ENCODE measurements at regions of chr10 and their contacts with region 1.

Region 1: DNA sequence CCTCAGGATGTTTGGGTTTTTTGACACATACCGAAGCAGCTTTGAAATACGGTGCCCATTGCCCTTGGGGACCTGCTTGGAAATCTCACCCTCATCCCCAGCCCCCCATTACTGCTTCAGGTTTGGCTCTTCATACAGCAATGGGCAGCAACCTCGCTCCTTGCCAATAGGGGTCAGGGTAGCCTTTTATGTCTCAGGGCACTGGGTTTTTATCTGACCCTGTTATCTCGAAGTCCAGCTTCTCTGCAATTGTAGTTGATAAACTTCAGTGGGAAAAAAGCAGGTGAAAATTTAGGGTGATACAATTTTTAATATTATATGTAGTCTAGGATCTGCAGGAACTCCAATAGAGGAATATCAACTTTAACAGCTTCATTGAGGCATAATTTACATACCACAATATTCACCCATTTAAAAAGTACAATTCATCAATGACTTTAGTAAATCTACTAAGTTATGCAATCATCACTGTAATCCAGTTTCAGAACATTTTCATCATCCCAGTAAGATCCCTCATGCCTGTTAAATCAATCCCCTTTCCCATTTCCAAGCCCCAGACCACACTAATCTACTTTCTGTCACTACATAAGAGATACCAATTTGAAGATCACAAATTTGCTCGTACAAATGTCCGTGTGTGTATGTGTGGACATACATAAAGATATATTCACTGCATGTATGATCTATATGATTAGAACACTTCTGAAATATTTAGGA is 386.2 kb downstream of the KCNMA1 start:
- DNase-seq: peak; percentile 62
- ATAC-seq: peak; percentile 76
- H3K4me3 ChIP-seq: no peak overlapping the region
- H3K27ac ChIP-seq: no peak overlapping the region
- H3K4me1 ChIP-seq: peaks cover 10% of the 10 kb centered on the region
- H3K27me3 ChIP-seq: no peaks in the 10 kb centered on the region
- CTCF ChIP-seq: peak; percentile 78
- POLR2A ChIP-seq: no peak
- RAD21 ChIP-seq: peak; percentile 86

Region 2: DNA sequence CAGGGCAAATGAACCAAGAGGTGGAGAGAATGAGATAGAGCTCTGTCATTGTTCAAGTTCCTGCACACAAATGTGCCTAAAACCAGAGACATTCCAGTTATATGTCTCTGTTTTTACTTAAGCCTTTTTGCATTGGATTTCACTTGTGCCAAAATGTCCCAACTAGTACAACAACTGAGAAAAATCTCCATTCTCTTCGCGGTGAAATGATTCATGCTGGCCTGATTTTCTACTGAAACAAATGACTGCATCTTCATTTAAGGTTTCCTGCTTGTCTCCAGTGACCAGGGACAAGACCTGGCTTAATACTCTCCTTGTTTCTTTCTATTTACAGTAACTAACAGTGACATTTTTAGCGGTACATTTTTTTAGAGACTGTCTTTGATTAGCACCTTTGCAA is 328.8 kb before region 1 on chr10:
- CTCF ChIA-PET with region 1: no interaction called
- POLR2A ChIA-PET with region 1: no interaction called
- dilution Hi-C with region 1: no loop called
- in situ Hi-C with region 1: no loop called
- intact Hi-C with region 1: no loop called
- DNase-seq: no peak
- ATAC-seq: no peak
- H3K4me3 ChIP-seq: no peak overlapping the region
- H3K27ac ChIP-seq: no peak overlapping the region
- H3K4me1 ChIP-seq: no peaks in the 10 kb centered on the region
- H3K27me3 ChIP-seq: no peaks in the 10 kb centered on the region
- CTCF ChIP-seq: no peak
- POLR2A ChIP-seq: no peak
- RAD21 ChIP-seq: no peak

Region 3: GRCh38 chr10:77501152-77501845 is 249.8 kb after region 1 on chr10:
- CTCF ChIA-PET with region 1: no interaction called
- POLR2A ChIA-PET with region 1: no interaction called
- dilution Hi-C with region 1: no loop called
- in situ Hi-C with region 1: no loop called
- intact Hi-C with region 1: loop called (anchors 10 kb)
- DNase-seq: peak; percentile 93
- ATAC-seq: peak; percentile 72
- H3K4me3 ChIP-seq: no peak overlapping the region
- H3K27ac ChIP-seq: peak overlapping the region; percentile 57
- H3K4me1 ChIP-seq: peaks cover 37% of the 10 kb centered on the region
- H3K27me3 ChIP-seq: no peaks in the 10 kb centered on the region
- CTCF ChIP-seq: no peak
- POLR2A ChIP-seq: no peak
- RAD21 ChIP-seq: no peak

Region 4: DNA sequence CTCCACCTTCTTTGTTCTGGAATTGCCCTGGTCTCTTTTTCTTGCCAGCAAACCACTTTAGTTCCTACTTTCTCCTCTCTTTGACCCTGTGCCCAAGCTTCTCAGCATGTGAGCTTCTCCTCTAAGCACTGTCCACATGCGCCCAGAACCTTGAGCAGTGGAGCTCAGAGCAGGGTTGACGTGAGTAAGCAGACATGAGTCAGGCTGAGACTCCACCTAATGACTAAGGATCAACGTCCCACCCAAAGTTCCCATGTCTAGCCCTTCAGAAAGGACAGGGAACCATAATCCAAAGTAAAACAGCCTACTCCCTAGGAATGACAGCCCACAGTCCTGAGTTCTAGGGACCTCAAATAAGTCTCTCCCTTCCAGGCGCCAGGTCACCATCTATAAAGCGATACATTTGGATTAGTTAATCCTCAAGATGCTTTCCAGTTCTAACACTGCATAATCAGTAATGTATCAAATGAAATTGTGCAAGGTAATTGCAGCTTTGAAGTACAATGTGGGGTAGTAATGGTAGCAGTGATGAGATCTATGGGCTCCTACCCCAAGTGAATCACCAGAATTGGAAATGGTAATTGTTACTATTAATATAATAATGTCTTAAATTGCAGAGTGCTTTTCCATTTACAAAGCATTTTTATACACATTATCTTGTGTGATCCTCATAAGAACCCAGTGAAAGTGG is 341.6 kb after region 1 on chr10:
- CTCF ChIA-PET with region 1: no interaction called
- POLR2A ChIA-PET with region 1: no interaction called
- dilution Hi-C with region 1: no loop called
- in situ Hi-C with region 1: no loop called
- intact Hi-C with region 1: no loop called
- DNase-seq: peak; percentile 97
- ATAC-seq: peak; percentile 98
- H3K4me3 ChIP-seq: no peak overlapping the region
- H3K27ac ChIP-seq: peak overlapping the region; percentile 8; the same call in 1 of the 2 replicates
- H3K4me1 ChIP-seq: peaks cover 10% of the 10 kb centered on the region
- H3K27me3 ChIP-seq: no peaks in the 10 kb centered on the region
- CTCF ChIP-seq: no peak
- POLR2A ChIP-seq: no peak
- RAD21 ChIP-seq: peak; percentile 23; the same call in 1 of the 2 replicates

Region 5: DNA sequence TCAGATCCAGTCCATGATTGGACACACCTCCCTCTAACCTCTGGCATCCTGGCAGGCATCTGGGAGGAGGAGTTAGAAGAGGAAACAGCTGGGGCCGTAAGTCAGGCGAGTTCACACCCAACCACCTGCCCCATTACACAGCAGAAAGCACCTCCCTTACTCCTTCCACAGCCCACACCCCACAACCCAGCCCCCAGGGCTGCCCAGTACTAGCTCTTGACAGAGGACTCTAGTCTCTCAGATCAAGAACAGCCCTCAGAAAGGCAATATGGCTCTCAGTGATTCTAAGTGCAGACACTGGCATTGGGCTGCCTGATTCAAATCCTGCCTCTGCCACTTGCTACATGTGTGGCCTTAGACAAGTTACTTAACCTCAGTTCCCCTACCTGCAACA is 352.1 kb after region 1 on chr10:
- CTCF ChIA-PET with region 1: no interaction called
- POLR2A ChIA-PET with region 1: no interaction called
- dilution Hi-C with region 1: no loop called
- in situ Hi-C with region 1: no loop called
- intact Hi-C with region 1: loop called (anchors 1 kb)
- DNase-seq: peak; percentile 44
- ATAC-seq: peak; percentile 9
- H3K4me3 ChIP-seq: no peak overlapping the region
- H3K27ac ChIP-seq: no peak overlapping the region
- H3K4me1 ChIP-seq: peaks cover 27% of the 10 kb centered on the region
- H3K27me3 ChIP-seq: no peaks in the 10 kb centered on the region
- CTCF ChIP-seq: no peak
- POLR2A ChIP-seq: no peak
- RAD21 ChIP-seq: no peak

Measured in IMR-90 (cell line).